Naive thymus-derived CD4-positive, alpha-beta T cell (primary cell): ENCODE measurements at regions of chr17 and their contacts with region 1.

Region 1: GRCh38 chr17:29722411-29723198 is 99.9 kb upstream of the CORO6 start:
- DNase-seq: peak in 7 of 9 donors; percentile 69 to 85 (median 80)
- ATAC-seq: peak; percentile 84
- H3K4me3 ChIP-seq: peak overlapping the region; percentile 32
- H3K4me3 Mint-ChIP-seq: peak overlapping the region; percentile 55 to 92 (median 72)
- H3K27ac ChIP-seq: peak overlapping the region; percentile 72
- H3K27ac Mint-ChIP-seq: peak overlapping the region; percentile 21 to 98 (median 92)
- H3K4me1 ChIP-seq: peaks cover 56 to 74% of the 10 kb centered on the region in 2 donors
- H3K4me1 Mint-ChIP-seq: peaks cover 55 to 94% (median 85%) of the 10 kb centered on the region in 7 donors
- H3K27me3 ChIP-seq: no peaks in the 10 kb centered on the region
- H3K27me3 Mint-ChIP-seq: no peaks in the 10 kb centered on the region

Region 2: DNA sequence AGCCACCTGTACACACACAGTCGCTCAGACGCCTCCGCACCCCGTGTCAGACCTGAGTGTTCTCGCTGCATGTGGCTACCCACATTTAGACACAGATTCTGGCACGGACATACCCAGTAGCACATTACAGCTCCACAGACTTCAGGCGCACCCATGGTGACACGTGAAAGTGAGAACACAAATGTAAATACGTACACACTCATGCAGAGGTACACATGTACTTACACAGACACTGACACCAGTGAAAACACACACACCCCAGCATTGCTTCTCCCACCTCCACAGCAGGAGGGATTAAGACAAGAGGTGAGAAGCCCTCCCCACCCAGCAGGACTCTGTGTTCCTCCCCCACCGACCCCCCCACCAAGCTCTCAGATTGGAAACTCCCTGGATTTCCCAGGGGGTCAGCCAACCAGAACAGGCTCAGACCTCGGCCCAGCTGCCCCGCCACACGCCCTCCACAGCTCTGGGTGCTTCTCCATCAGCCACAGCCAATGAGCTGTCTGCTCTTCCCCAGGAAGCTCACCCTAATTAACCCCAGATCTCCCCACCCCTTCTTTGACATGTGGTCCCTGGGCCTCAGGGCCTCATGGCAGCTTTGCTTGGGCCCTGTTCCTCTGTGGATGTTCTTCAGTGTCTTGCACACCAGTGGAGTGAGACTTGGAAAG is 1221.8 kb before region 1 on chr17:
- CTCF ChIA-PET with region 1: no interaction called
- POLR2A ChIA-PET with region 1: no interaction called
- intact Hi-C with region 1: no loop called
- DNase-seq: no peak
- ATAC-seq: no peak
- H3K4me3 ChIP-seq: no peak overlapping the region
- H3K4me3 Mint-ChIP-seq: no peak overlapping the region
- H3K27ac ChIP-seq: no peak overlapping the region
- H3K27ac Mint-ChIP-seq: no peak overlapping the region
- H3K4me1 ChIP-seq: no peaks in the 10 kb centered on the region
- H3K4me1 Mint-ChIP-seq: peaks cover 0 to 2% (median 0%) of the 10 kb centered on the region in 7 donors
- H3K27me3 ChIP-seq: no peaks in the 10 kb centered on the region
- H3K27me3 Mint-ChIP-seq: peaks cover 0 to 9% (median 5%) of the 10 kb centered on the region in 5 donors

Region 3: GRCh38 chr17:29628644-29629043 is 94.0 kb before region 1 on chr17:
- CTCF ChIA-PET with region 1: no interaction called
- POLR2A ChIA-PET with region 1: no interaction called
- intact Hi-C with region 1: no loop called
- DNase-seq: no peak
- ATAC-seq: no peak
- H3K4me3 ChIP-seq: no peak overlapping the region
- H3K4me3 Mint-ChIP-seq: no peak overlapping the region
- H3K27ac ChIP-seq: no peak overlapping the region
- H3K27ac Mint-ChIP-seq: peak overlapping the region in 8 of 9 donors; percentile 5 to 68 (median 56)
- H3K4me1 ChIP-seq: no peaks in the 10 kb centered on the region
- H3K4me1 Mint-ChIP-seq: peaks cover 15 to 60% (median 41%) of the 10 kb centered on the region in 7 donors
- H3K27me3 ChIP-seq: no peaks in the 10 kb centered on the region
- H3K27me3 Mint-ChIP-seq: no peaks in the 10 kb centered on the region

Region 4: DNA sequence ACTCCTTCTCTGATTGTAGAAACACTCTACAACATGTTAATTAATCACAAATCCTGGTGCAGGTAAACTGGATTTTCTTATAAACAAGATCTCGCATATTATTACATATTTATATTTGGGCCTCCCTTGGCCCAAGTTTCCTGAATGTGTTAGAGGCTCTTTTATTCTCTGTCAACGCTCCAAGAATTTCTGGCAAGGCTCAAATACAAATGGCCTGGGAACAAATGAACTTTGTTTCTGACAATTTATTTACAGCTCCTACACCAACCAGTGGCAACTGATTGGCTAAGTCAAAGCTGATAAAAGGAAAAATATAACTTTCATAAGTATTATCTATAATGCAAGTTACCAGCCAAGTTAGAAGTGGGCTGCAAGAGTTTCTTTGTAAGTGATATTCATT is 35.0 kb before region 1 on chr17:
- CTCF ChIA-PET with region 1: interaction called, 3 read pairs
- POLR2A ChIA-PET with region 1: no interaction called
- intact Hi-C with region 1: loop called (anchors 5 kb)
- DNase-seq: no peak
- ATAC-seq: no peak
- H3K4me3 ChIP-seq: no peak overlapping the region
- H3K4me3 Mint-ChIP-seq: no peak overlapping the region
- H3K27ac ChIP-seq: no peak overlapping the region
- H3K27ac Mint-ChIP-seq: peak overlapping the region in 4 of 9 donors; percentile 24 to 68 (median 41)
- H3K4me1 ChIP-seq: peaks cover 0 to 8% of the 10 kb centered on the region in 2 donors
- H3K4me1 Mint-ChIP-seq: peaks cover 7 to 50% (median 25%) of the 10 kb centered on the region in 7 donors
- H3K27me3 ChIP-seq: no peaks in the 10 kb centered on the region
- H3K27me3 Mint-ChIP-seq: no peaks in the 10 kb centered on the region

Region 5: GRCh38 chr17:29710891-29711418 is 11.7 kb before region 1 on chr17:
- CTCF ChIA-PET with region 1: interaction called, 10 read pairs
- POLR2A ChIA-PET with region 1: interaction called, 102 read pairs
- intact Hi-C with region 1: loop called in 1 of 2 experiments (anchors 1 kb)
- DNase-seq: no peak
- ATAC-seq: no peak
- H3K4me3 ChIP-seq: no peak overlapping the region
- H3K4me3 Mint-ChIP-seq: peak overlapping the region in 1 of 10 donors; percentile 24
- H3K27ac ChIP-seq: no peak overlapping the region
- H3K27ac Mint-ChIP-seq: peak overlapping the region in 8 of 9 donors; percentile 69 to 96 (median 86)
- H3K4me1 ChIP-seq: peaks cover 29 to 30% of the 10 kb centered on the region in 2 donors
- H3K4me1 Mint-ChIP-seq: peaks cover 37 to 92% (median 75%) of the 10 kb centered on the region in 7 donors
- H3K27me3 ChIP-seq: no peaks in the 10 kb centered on the region
- H3K27me3 Mint-ChIP-seq: no peaks in the 10 kb centered on the region

Region 6: GRCh38 chr17:29740017-29740416 is 17.4 kb after region 1 on chr17:
- CTCF ChIA-PET with region 1: interaction called, 3 read pairs
- POLR2A ChIA-PET with region 1: interaction called, 24 read pairs
- intact Hi-C with region 1: loop called in 1 of 2 experiments (anchors 2 kb)
- DNase-seq: peak in 4 of 9 donors; percentile 18 to 28 (median 20)
- ATAC-seq: no peak
- H3K4me3 ChIP-seq: no peak overlapping the region
- H3K4me3 Mint-ChIP-seq: peak overlapping the region in 7 of 10 donors; percentile 8 to 68 (median 56)
- H3K27ac ChIP-seq: peak overlapping the region; percentile 33
- H3K27ac Mint-ChIP-seq: peak overlapping the region in 8 of 9 donors; percentile 55 to 91 (median 70)
- H3K4me1 ChIP-seq: peaks cover 12 to 34% of the 10 kb centered on the region in 2 donors
- H3K4me1 Mint-ChIP-seq: peaks cover 31 to 76% (median 58%) of the 10 kb centered on the region in 7 donors
- H3K27me3 ChIP-seq: no peaks in the 10 kb centered on the region
- H3K27me3 Mint-ChIP-seq: no peaks in the 10 kb centered on the region